ENCODE measurements at regions of chr6 and their contacts with region 1.

Region 1: GRCh38 chr6:25250878-25251277 is 28.3 kb upstream of the CARMIL1 start:
- DNase-seq: no peak
- ATAC-seq: no peak

Region 2: GRCh38 chr6:25193460-25194171 is 57.3 kb before region 1 on chr6:
- intact Hi-C with region 1: no loop called
- DNase-seq: no peak
- ATAC-seq: peak; percentile 83

Region 3: DNA sequence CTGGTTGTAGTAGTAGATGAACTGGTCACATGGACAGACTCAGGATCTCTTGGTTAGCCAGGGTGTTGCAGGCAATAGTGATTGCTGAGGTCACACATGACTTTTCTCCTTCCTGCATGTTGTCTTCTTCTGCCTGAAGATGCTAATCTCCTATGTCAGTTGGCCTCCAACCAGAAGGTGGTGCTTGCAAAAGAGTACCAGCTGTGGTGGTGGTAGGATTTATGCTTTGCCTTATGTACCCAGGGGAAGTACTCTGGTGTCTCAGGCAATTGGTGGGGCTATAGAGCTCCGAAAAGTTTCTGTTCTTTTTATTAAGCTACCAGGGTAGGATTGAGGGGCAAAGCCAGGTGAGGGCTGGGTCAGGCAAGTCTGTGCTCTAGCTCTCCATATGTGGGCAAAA is 126.8 kb after region 1 on chr6:
- intact Hi-C with region 1: no loop called
- DNase-seq: no peak
- ATAC-seq: no peak

Region 4: GRCh38 chr6:25511376-25511775 is 260.5 kb after region 1 on chr6:
- intact Hi-C with region 1: no loop called
- DNase-seq: no peak
- ATAC-seq: no peak

Region 5: DNA sequence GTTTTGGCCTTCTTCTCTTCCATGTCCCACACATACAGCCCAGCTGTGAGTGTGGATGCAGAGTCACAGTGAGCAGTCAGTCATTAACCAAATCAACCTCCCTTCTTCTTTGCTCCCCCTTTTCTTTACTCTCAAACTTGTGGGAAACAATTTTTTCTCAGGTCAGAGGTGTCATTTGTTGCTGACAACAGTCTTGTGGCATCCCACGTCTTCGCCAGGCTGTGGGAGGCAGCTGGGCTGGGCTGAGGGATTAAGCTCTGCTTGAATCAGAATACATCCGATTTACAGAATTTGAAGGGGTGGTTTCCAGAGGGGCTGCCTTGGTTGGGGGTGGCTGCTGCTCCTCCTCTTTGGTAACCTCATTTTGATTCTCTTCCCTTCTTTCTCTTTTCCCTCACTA is 441.6 kb after region 1 on chr6:
- intact Hi-C with region 1: loop called (anchors 5 kb)
- DNase-seq: no peak
- ATAC-seq: no peak

Measured in left ventricle myocardium superior (tissue), 1 donor.